Activated CD4-positive, alpha-beta T cell treated with anti-CD3 and anti-CD28 coated beads, Interleukin-2, amount 10 ng/mL, durations not matched to agents 7 days and 5 days (primary cell): ENCODE measurements at regions of chr18 and their contacts with region 1.

Region 1: DNA sequence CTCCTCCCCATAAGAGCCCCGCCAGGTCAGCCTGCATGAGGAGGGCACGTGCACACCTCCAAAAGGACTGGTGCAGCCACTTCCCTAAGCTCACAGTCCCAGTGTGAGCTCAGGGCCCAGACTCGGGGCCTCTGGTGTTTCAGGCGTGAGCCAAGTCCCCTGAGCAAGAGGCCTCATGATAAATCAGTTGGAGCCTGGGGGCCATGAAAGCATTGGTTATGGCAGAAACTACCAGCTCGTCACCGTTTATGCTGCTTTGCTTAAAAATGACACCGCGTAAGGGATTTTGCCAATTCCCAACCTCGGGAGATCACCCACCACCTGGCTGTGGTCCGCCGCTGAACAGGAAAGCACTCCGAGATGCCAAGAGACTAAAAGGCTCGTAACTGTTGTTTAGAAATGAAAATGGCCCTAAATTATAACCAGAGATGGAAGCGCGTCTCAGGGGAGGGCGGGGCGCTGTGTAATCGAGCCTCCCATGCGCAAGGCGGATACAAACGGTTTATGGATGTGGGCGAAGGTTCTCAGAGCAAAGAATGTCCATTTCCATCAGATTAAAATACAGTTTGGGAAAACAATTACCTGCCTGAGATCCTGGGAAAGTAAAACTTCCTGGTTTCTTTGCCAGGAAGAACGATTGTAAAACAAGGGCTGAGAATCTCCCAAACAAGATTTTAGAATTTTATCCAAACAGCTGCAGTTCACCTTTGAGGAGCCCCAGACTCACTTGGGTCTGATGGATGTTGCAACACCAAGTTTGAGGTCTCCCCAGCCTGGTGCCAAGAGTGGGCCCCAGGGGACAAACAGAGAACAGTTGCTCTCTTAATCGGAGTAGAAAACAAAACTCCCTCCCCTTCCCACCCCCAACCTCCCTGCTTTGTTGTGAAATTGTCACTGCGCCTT is 141.4 kb downstream of the BCL2 start:
- DNase-seq: no peak
- H3K4me3 Mint-ChIP-seq: no peak overlapping the region
- H3K27ac Mint-ChIP-seq: no peak overlapping the region
- H3K4me1 Mint-ChIP-seq: peaks cover 45% of the 10 kb centered on the region
- H3K27me3 Mint-ChIP-seq: no peaks in the 10 kb centered on the region

Region 2: GRCh38 chr18:63161761-63162195 is 16.4 kb before region 1 on chr18:
- CTCF ChIA-PET with region 1: interaction called, 10 read pairs
- POLR2A ChIA-PET with region 1: no interaction called
- DNase-seq: peak; percentile 86
- H3K4me3 Mint-ChIP-seq: peak overlapping the region; percentile 78
- H3K27ac Mint-ChIP-seq: peak overlapping the region; percentile 95
- H3K4me1 Mint-ChIP-seq: peaks cover 93% of the 10 kb centered on the region
- H3K27me3 Mint-ChIP-seq: no peaks in the 10 kb centered on the region